ENCODE measurements at regions of chr11 and their contacts with region 1.

Region 1: DNA sequence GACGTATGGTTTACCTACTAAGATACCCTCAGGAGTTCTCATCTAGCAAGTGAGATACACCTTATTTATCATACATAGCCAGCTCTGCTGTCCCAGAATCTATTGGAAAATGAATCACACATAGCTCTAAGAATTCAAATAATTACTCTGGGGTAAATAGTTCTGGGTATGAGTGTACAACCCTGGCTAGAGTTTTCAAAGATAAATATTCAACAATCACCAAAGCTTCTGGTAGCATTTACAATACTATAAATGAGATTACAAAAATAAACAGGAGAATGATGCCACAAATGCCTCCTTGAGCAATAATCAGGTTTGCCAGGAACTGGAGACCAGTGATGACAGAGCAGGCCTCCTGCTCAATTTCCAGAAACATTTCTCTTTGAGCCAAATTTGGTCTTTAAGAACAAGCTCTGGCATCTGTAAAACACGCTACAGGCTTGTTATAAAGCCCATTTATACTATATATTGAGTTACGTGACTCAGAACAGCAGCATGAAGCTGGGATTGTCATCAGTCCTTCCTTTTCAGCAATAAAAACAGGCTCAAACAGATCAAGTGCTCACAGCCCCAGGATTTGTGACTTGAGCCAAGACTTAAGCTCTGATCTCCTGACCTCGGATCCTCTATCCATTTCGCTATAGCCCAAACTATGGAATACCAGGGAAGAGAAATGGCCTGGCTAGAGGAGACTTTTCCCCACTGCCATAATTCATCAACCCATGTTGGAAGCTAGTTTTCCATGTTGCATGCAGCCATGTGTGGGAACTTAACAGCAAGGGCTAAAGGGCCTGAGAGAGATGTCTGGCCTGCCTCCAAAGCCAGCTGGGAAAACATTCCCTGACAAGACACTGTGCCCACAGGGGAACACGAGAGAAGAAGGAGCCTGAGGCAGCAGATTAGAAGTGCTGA is 19.7 kb downstream of the RAB30 start:
- DNase-seq: peak; percentile 92
- H3K4me3 Mint-ChIP-seq: peak overlapping the region; percentile 43
- H3K27ac Mint-ChIP-seq: peak overlapping the region; percentile 84
- H3K4me1 Mint-ChIP-seq: peaks cover 50% of the 10 kb centered on the region
- H3K27me3 Mint-ChIP-seq: no peaks in the 10 kb centered on the region
- CTCF ChIP-seq: no peak

Region 2: DNA sequence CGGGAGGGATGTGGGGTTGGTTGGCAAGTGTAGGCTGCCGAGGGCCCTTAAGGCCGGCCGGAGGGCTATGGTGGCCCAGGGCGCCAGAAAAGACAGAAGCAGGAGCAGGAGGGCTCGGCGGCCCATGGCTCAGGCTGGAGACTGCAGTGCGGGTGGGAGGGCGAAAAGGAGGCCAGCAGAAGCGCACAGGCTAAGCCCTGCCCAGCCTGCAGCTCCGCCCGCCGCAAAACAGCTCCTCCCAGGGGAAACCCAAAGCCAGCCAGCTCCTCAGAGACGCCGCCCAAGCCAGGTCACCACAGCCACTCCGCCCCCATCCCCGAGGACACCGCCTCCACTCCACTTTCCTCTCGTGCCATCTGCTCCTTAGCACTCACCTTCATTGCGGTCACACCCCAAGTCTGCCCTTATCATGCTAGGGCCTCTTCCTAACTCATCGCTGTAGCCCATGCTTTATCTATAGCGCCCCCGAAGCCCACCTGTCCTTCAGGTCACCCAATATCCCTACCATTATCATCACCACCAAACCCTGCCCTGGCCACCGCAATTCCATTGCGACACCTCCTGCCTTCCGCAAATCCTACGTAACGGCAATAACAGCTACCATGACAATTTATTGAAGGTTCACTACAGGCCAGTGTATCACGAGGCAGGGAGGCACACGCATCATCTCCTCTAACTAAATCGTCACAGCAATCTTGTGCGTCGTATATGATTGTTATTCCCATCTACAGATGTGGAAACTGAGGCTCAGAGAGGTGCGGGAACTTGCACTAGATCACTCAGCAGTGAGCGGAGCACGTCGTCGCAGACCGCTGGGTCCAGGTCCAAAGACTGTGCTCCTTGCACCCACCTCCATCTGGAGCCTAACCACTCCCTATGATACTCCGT is 151.5 kb before region 1 on chr11 and contains the start of gene PRCP:
- CTCF ChIA-PET with region 1: interaction called, 3 read pairs
- POLR2A ChIA-PET with region 1: interaction called, 13 read pairs
- intact Hi-C with region 1: no loop called
- DNase-seq: peak; percentile 91
- H3K4me3 Mint-ChIP-seq: peak within 1 kb of the TSS; percentile 88
- H3K27ac Mint-ChIP-seq: peak within 1 kb of the TSS; percentile 95
- H3K4me1 Mint-ChIP-seq: peaks cover 38% of the 10 kb centered on the region
- H3K27me3 Mint-ChIP-seq: no peaks in the 10 kb centered on the region
- CTCF ChIP-seq: no peak
- total RNA-seq, gene PRCP: 17.3 and 22.7 TPM in 2 replicates

Region 3: GRCh38 chr11:83019888-83020579 is 32.0 kb before region 1 on chr11:
- CTCF ChIA-PET with region 1: interaction called, 5 read pairs
- POLR2A ChIA-PET with region 1: interaction called, 30 read pairs
- intact Hi-C with region 1: no loop called
- DNase-seq: peak; percentile 29
- H3K4me3 Mint-ChIP-seq: no peak overlapping the region
- H3K27ac Mint-ChIP-seq: peak overlapping the region; percentile 61
- H3K4me1 Mint-ChIP-seq: peaks cover 19% of the 10 kb centered on the region
- H3K27me3 Mint-ChIP-seq: no peaks in the 10 kb centered on the region
- CTCF ChIP-seq: no peak

Region 4: GRCh38 chr11:83025267-83025720 is 26.7 kb before region 1 on chr11:
- CTCF ChIA-PET with region 1: interaction called, 7 read pairs
- POLR2A ChIA-PET with region 1: interaction called, 30 read pairs
- intact Hi-C with region 1: no loop called
- DNase-seq: peak; percentile 71
- H3K4me3 Mint-ChIP-seq: no peak overlapping the region
- H3K27ac Mint-ChIP-seq: peak overlapping the region; percentile 19
- H3K4me1 Mint-ChIP-seq: peaks cover 16% of the 10 kb centered on the region
- H3K27me3 Mint-ChIP-seq: no peaks in the 10 kb centered on the region
- CTCF ChIP-seq: no peak

Region 5: DNA sequence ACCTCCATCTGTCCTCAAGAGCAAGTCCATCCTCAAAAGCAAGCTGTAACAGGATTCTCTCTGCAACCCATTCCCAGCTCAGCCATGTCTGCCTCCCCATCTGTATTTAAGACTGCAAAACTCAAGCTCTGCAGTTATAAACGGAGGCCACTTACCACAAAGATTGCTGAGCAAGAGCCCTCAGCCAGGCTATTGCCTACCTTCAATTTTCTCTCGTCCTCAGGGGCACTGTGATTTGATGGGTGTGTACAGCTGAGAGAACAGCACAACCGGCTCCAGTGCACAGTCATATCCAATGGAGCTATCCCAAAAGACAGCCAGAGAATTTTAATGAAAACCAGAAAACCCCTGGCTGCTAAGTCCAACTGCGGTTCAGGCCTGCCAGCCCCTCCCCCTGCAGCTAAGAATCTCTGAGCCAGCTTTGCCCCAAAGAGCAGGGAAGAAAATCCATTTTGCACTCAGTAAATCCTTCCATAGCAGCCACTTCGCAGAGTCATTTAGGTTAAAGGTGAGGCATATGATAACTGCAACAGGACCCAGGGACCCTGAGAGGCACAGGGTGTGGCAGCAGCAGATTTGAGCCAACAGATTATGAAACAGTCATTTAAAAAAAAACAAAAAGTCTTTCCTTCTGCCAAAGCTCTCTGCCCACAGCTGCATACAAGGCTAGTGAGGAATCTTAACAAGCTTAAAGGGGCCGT is 17.9 kb before region 1 on chr11:
- CTCF ChIA-PET with region 1: interaction called, 15 read pairs
- POLR2A ChIA-PET with region 1: interaction called, 73 read pairs
- intact Hi-C with region 1: no loop called
- DNase-seq: peak; percentile 77
- H3K4me3 Mint-ChIP-seq: peak overlapping the region; percentile 66
- H3K27ac Mint-ChIP-seq: peak overlapping the region; percentile 72
- H3K4me1 Mint-ChIP-seq: peaks cover 22% of the 10 kb centered on the region
- H3K27me3 Mint-ChIP-seq: no peaks in the 10 kb centered on the region
- CTCF ChIP-seq: no peak

Region 6: GRCh38 chr11:83063073-83063754 is 11.2 kb after region 1 on chr11:
- CTCF ChIA-PET with region 1: interaction called, 7 read pairs
- POLR2A ChIA-PET with region 1: interaction called, 134 read pairs
- intact Hi-C with region 1: no loop called
- DNase-seq: peak; percentile 19
- H3K4me3 Mint-ChIP-seq: no peak overlapping the region
- H3K27ac Mint-ChIP-seq: peak overlapping the region; percentile 81
- H3K4me1 Mint-ChIP-seq: peaks cover 16% of the 10 kb centered on the region
- H3K27me3 Mint-ChIP-seq: no peaks in the 10 kb centered on the region
- CTCF ChIP-seq: no peak

Measured in MCF 10A (cell line).